Mammary epithelial cell (primary cell): ENCODE measurements at regions of chr3 and their contacts with region 1.

Region 1: DNA sequence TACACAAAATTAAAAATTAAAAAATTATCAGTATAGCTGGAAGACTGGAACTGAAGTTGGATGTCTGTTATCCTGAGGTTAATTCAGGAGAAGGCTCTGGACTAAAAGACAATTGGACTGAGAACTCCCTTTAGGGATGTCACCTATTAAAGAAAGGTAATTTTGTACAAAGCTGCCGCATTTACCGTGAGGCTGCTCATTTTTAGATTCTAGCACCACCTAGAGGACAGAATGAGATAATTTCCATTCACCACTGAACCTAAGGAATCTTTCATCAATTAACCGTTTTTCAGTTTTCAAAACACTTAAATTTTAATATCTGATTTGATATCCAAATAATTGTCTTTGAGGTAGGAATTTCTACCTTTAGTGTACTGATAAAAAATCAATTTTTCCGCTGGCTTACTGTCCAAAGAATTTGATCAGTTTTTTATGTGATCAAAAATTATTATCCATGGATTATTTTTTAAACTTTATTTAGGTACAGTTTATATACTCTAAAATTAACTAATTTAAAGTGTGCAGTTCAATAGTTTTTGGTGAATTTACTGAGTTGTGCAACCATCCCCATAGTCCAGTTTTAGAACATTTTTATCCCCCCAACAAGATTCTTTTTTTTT is 106.7 kb upstream of the TNIK start:
- DNase-seq: peak; percentile 25
- H3K4me3 ChIP-seq: no peak overlapping the region
- H3K27ac ChIP-seq: no peak overlapping the region
- H3K4me1 ChIP-seq: no peaks in the 10 kb centered on the region
- H3K27me3 ChIP-seq: no peaks in the 10 kb centered on the region
- CTCF ChIP-seq: peak; percentile 65 to 74

Region 2: DNA sequence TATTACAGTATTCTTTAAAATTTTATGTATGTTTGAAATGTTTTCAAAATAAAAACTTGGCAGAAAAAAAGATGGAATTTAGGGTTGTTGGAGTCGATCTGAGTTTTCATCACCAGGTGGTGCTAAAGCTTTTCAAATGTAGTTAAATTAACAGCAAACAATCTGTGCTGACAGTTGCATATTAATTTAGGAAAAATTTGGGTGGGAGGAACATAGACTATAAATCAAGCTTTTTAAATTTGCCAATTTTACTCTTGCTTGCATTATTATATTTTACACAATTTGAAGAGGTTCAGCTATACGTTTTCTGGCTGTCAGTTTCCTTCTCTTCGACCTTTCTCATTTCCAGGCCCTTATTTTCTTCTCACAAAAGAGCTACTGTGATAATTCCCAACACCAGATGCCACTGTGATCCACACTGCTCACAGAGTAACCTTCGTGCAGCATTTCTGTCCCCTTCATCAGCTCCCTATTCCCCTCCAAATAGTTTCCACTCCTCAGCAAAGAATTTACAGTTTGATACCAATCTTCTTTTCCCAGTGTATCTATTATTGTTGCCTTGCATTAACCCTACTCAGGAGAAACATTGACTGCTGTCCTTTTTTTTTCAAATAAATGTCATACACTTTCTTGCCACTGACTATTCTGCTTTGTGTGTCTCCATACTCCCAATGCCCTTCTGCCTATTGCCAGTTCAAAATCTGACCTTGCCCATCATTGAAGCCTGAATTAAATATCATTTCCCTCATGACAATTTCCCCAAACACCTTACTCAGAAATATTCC is 605.1 kb before region 1 on chr3:
- CTCF ChIA-PET with region 1: interaction called, 4 read pairs
- dilution Hi-C with region 1: no loop called
- in situ Hi-C with region 1: loop called (anchors 10 to 25 kb)
- intact Hi-C with region 1: loop called (anchors 1 kb)
- DNase-seq: peak; percentile 12
- H3K4me3 ChIP-seq: no peak overlapping the region
- H3K27ac ChIP-seq: no peak overlapping the region
- H3K4me1 ChIP-seq: no peaks in the 10 kb centered on the region
- H3K27me3 ChIP-seq: no peaks in the 10 kb centered on the region
- CTCF ChIP-seq: peak; percentile 49 to 58

Region 3: GRCh38 chr3:171162986-171163723 is 403.8 kb before region 1 on chr3:
- CTCF ChIA-PET with region 1: no interaction called
- dilution Hi-C with region 1: no loop called
- in situ Hi-C with region 1: no loop called
- intact Hi-C with region 1: loop called (anchors 5 kb)
- DNase-seq: no peak
- H3K4me3 ChIP-seq: no peak overlapping the region
- H3K27ac ChIP-seq: no peak overlapping the region
- H3K4me1 ChIP-seq: peaks cover 16% of the 10 kb centered on the region
- H3K27me3 ChIP-seq: no peaks in the 10 kb centered on the region
- CTCF ChIP-seq: peak; percentile 55 to 60

Region 4: DNA sequence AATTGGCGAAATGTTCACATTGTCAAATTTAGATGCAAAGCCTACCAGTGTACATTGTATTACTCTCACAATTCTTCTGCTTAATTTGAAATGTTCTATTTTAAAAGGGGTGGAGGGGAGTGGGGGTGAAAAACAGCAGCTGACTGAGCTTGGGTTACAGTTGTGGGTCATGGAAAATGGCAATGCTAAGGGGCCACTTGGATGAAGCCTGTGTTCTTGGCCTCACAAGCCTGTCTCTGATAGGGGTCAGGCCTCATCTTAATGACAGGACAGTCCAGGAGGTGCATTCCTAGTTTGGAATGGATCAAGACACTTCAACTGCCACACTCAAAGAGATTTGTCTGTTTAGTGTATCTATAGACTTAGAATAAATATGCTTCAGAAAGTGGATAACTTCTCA is 264.9 kb before region 1 on chr3:
- CTCF ChIA-PET with region 1: no interaction called
- dilution Hi-C with region 1: no loop called
- in situ Hi-C with region 1: no loop called
- intact Hi-C with region 1: no loop called
- DNase-seq: no peak
- H3K4me3 ChIP-seq: no peak overlapping the region
- H3K27ac ChIP-seq: no peak overlapping the region
- H3K4me1 ChIP-seq: peaks cover 9% of the 10 kb centered on the region
- H3K27me3 ChIP-seq: no peaks in the 10 kb centered on the region
- CTCF ChIP-seq: no peak